ENCODE measurements at regions of chr10 and their contacts with region 1.

Region 1: GRCh38 chr10:90999512-91000172 is 78.8 kb upstream of the ANKRD1 start:
- DNase-seq: no peak
- H3K4me3 ChIP-seq: no peak overlapping the region
- H3K27ac ChIP-seq: no peak overlapping the region
- H3K4me1 ChIP-seq: no peaks in the 10 kb centered on the region
- H3K27me3 ChIP-seq: no peaks in the 10 kb centered on the region
- CTCF ChIP-seq: no peak
- EP300 ChIP-seq: no peak
- POLR2A ChIP-seq: no peak

Region 2: DNA sequence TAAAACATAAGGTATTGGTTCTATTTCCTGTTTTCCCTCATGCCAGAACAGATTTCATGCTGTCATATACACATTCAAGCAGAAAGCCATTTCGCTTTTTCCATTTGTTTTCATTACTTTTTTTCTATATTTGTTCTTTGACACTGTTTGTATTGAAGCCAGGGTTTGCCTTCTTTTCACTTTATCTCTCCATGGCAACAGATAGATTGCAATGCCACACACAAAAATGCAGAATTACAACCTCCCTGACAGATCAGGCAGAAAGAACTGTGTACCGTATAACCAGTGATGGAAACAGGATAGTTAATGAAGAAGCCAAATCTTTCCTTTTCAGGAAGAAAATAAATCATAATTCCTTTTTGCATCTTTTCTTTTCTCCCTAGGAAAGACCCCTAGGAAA is 117.9 kb after region 1 on chr10:
- intact Hi-C with region 1: loop called in 1 of 4 experiments (anchors 5 kb)
- DNase-seq: no peak
- H3K4me3 ChIP-seq: no peak overlapping the region
- H3K27ac ChIP-seq: no peak overlapping the region
- H3K4me1 ChIP-seq: no peaks in the 10 kb centered on the region
- H3K27me3 ChIP-seq: no peaks in the 10 kb centered on the region
- CTCF ChIP-seq: no peak
- EP300 ChIP-seq: no peak
- POLR2A ChIP-seq: no peak

Measured in ovary (tissue), 10 donors.